ENCODE measurements at regions of chr4 and their contacts with region 1.

Region 1: GRCh38 chr4:100823066-100823992 is 305.5 kb upstream of the EMCN start:
- DNase-seq: peak; percentile 53
- H3K4me3 Mint-ChIP-seq: no peak overlapping the region
- H3K27ac Mint-ChIP-seq: peak overlapping the region; percentile 82
- H3K4me1 Mint-ChIP-seq: peaks cover 9% of the 10 kb centered on the region
- H3K27me3 Mint-ChIP-seq: peaks cover under 1% of the 10 kb centered on the region

Region 2: DNA sequence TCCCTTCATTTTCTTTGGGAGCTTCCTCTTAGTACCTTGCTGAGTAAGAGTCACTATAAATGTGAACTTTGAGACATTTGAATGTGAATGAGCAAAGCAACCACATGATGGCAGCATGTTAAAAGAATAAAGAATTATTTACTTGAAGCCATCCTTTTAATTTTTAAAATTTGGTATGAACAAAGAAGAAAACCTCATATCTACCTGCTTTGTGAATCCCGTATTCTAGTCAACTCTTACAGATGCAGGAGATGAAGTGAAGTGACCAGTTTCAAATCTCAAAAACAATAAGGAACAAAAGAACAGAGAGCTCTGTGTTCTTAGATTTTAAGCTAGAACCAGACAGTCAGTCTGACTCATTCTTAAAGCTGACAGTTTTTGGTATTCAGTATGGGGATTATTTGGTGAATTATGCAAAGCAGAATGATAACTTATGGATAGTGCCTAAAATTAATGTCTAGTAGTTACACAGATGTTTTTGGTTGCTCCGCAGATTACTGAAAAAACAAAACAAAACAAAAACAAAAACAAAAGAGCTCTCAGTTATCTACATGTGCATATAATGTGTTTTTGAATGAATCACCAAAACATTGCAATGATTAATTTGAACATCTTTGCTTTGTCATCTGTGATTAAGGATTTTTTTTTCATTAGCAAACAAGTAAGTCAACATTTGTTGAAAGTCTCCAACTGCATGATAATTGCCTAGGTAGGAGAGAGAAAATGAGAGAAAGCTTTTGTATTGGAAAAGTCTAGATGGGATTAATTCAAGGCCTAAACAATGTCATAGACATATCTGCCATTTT is 825.1 kb before region 1 on chr4:
- CTCF ChIA-PET with region 1: no interaction called
- intact Hi-C with region 1: loop called (anchors 10 kb)
- DNase-seq: peak; percentile 10
- H3K4me3 Mint-ChIP-seq: no peak overlapping the region
- H3K27ac Mint-ChIP-seq: peak overlapping the region; percentile 59
- H3K4me1 Mint-ChIP-seq: peaks cover 11% of the 10 kb centered on the region
- H3K27me3 Mint-ChIP-seq: peaks cover 5% of the 10 kb centered on the region

Region 3: GRCh38 chr4:100428051-100428450 is 395.3 kb before region 1 on chr4:
- CTCF ChIA-PET with region 1: no interaction called
- intact Hi-C with region 1: no loop called
- DNase-seq: no peak
- H3K4me3 Mint-ChIP-seq: no peak overlapping the region
- H3K27ac Mint-ChIP-seq: no peak overlapping the region
- H3K4me1 Mint-ChIP-seq: peaks cover 6% of the 10 kb centered on the region
- H3K27me3 Mint-ChIP-seq: no peaks in the 10 kb centered on the region

Region 4: GRCh38 chr4:100539706-100540105 is 283.6 kb before region 1 on chr4:
- CTCF ChIA-PET with region 1: no interaction called
- intact Hi-C with region 1: no loop called
- DNase-seq: no peak
- H3K4me3 Mint-ChIP-seq: no peak overlapping the region
- H3K27ac Mint-ChIP-seq: no peak overlapping the region
- H3K4me1 Mint-ChIP-seq: no peaks in the 10 kb centered on the region
- H3K27me3 Mint-ChIP-seq: no peaks in the 10 kb centered on the region

Region 5: DNA sequence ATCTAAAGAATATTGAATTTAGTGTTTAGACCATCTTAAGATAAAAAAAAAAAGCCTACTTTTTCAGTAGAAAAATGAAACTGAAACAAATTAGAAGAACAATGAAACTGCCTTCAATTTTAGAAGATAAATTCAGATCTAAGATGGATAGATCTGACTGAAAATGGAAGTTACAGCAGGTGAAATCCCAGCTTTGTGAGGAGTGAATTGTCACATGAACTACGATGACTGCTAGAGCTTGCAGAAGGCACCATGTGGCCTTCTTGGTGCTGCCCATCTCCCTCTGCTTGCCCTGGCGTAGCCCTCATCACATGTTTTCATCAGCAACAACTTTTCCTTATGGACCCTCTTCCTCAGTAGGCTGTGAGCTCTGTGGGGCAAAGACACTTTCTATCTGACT is 254.1 kb before region 1 on chr4:
- CTCF ChIA-PET with region 1: no interaction called
- intact Hi-C with region 1: loop called (anchors 1 kb)
- DNase-seq: peak; percentile 26
- H3K4me3 Mint-ChIP-seq: no peak overlapping the region
- H3K27ac Mint-ChIP-seq: peak overlapping the region; percentile 59
- H3K4me1 Mint-ChIP-seq: peaks cover 21% of the 10 kb centered on the region
- H3K27me3 Mint-ChIP-seq: peaks cover 2% of the 10 kb centered on the region

Region 6: GRCh38 chr4:101103381-101104142 is 280.2 kb after region 1 on chr4:
- CTCF ChIA-PET with region 1: no interaction called
- intact Hi-C with region 1: loop called (anchors 1 kb)
- DNase-seq: no peak
- H3K4me3 Mint-ChIP-seq: no peak overlapping the region
- H3K27ac Mint-ChIP-seq: no peak overlapping the region
- H3K4me1 Mint-ChIP-seq: peaks cover 21% of the 10 kb centered on the region
- H3K27me3 Mint-ChIP-seq: no peaks in the 10 kb centered on the region

Region 7: DNA sequence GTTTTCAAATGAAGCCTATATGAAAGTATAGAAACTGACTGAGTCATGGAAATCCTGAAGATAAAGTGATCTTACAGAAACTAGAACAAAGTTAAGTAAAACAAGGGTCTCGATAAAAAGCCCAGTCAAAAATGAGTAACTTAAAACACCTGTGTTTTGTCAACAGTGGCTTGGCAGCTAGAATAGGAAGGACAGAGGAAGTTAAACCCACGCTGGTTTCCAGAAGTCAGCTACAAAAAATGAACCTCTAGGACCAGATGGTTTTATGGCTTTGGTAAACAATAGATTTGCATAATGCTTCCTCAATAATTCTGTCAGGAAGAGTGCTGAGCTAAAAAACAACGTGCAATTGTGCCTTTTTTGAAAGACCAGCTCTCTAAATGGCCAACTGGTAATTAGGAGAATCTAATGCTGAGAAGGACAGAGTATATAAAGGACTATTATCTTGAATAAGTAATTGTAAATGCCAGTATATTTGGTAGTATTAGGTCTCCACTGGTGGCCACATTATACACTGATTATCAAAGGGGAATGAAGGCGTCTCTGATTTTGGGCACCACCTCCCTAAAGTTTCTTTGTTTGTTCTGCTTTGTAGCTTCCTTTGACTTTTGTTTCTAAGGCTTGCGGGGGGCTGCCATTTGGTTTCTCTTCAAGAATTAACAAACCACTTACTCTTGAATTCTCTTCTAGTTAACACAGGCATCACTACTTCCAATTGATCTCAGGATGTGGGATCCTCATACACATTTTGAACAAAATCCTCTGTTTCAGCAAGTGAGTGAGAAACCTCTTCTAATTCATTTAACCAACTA is 596.2 kb after region 1 on chr4:
- CTCF ChIA-PET with region 1: no interaction called
- intact Hi-C with region 1: loop called (anchors 2 kb)
- DNase-seq: no peak
- H3K4me3 Mint-ChIP-seq: no peak overlapping the region
- H3K27ac Mint-ChIP-seq: no peak overlapping the region
- H3K4me1 Mint-ChIP-seq: peaks cover 36% of the 10 kb centered on the region
- H3K27me3 Mint-ChIP-seq: peaks cover 43% of the 10 kb centered on the region

Region 8: GRCh38 chr4:102007959-102008425 is 1184.7 kb after region 1 on chr4:
- CTCF ChIA-PET with region 1: no interaction called
- intact Hi-C with region 1: loop called (anchors 5 kb)
- DNase-seq: peak; percentile 26
- H3K4me3 Mint-ChIP-seq: no peak overlapping the region
- H3K27ac Mint-ChIP-seq: no peak overlapping the region
- H3K4me1 Mint-ChIP-seq: peaks cover 7% of the 10 kb centered on the region
- H3K27me3 Mint-ChIP-seq: no peaks in the 10 kb centered on the region

Measured in activated naive CD4-positive, alpha-beta T cell treated with anti-CD3 and anti-CD28 coated beads for 36 hours (primary cell).